GM12878 (cell line): ENCODE measurements at regions of chrX and their contacts with region 1.

Region 1: DNA sequence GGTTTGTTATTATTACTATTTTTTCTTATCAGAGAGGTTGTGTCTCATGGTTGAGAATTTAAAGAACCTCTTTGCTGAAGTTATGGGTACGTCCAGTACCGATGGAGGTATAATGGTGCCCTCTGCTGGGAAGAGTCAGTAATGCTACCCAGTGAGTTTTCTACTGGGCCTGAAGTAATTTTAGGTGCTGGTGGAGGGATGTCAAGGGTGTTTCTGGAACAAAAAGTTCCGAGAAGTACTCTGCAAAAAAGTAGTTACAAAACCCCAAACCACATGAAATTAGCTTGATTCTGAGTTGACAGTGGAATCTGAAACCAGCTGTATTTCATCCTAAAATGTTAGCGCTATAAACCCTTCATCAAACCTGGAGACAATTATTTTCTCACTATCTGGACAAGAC is 102.5 kb upstream of the MID1 start:
- DNase-seq: no peak
- ATAC-seq: peak; percentile 82
- H3K4me3 ChIP-seq: no peak overlapping the region
- H3K27ac ChIP-seq: no peak overlapping the region
- H3K4me1 ChIP-seq: no peaks in the 10 kb centered on the region
- H3K27me3 ChIP-seq: peaks cover 0 to 2% of the 10 kb centered on the region in 2 experiments; a peak in 1 of 4 replicates
- CTCF ChIP-seq: peak; percentile 73 to 78 (median 76)
- EP300 ChIP-seq: no peak
- POLR2A ChIP-seq: no peak
- RAD21 ChIP-seq: peak; percentile 74

Region 2: DNA sequence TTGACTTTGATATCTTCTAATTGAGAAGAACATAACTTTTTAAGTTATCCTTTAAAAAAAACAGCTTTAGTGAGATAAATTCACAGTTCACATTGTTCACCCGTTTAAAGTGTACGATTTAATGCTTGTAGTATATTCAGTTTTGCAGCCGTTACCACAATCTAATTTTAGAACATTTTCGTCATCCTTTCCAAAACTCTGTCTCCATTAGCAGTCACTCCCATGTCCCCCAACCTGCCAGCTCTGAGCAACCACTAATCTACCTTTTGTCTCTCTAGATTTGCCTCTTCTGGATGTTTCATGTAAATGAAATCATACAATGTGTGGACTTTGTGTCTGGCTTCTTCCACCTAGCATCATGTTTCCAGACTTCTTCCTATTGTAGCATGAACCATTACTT is 527.4 kb before region 1 on chrX:
- CTCF ChIA-PET with region 1: interaction called, 117 read pairs
- POLR2A ChIA-PET with region 1: no interaction called
- RAD21 ChIA-PET with region 1: interaction called, 16 read pairs
- SMC1A ChIA-PET with region 1: interaction called, 41 read pairs
- in situ Hi-C with region 1: no loop called
- intact Hi-C with region 1: no loop called
- DNase-seq: no peak
- ATAC-seq: no peak
- H3K4me3 ChIP-seq: no peak overlapping the region
- H3K27ac ChIP-seq: no peak overlapping the region
- H3K4me1 ChIP-seq: peaks cover 3% of the 10 kb centered on the region; the same call in 1 of the 2 replicates
- H3K27me3 ChIP-seq: 0 out of 4 replicates have a peak, but pooled peaks cover 0 to 1% of the 10 kb centered on the region in 2 experiments
- CTCF ChIP-seq: no peak
- EP300 ChIP-seq: no peak
- POLR2A ChIP-seq: no peak
- RAD21 ChIP-seq: no peak

Region 3: GRCh38 chrX:10904220-10904619 is 181.4 kb after region 1 on chrX:
- CTCF ChIA-PET with region 1: no interaction called
- POLR2A ChIA-PET with region 1: no interaction called
- RAD21 ChIA-PET with region 1: no interaction called
- SMC1A ChIA-PET with region 1: no interaction called
- in situ Hi-C with region 1: no loop called
- intact Hi-C with region 1: no loop called
- DNase-seq: no peak
- ATAC-seq: no peak
- H3K4me3 ChIP-seq: no peak overlapping the region
- H3K27ac ChIP-seq: no peak overlapping the region
- H3K4me1 ChIP-seq: no peaks in the 10 kb centered on the region
- H3K27me3 ChIP-seq: no peaks in the 10 kb centered on the region
- CTCF ChIP-seq: no peak
- EP300 ChIP-seq: no peak
- POLR2A ChIP-seq: no peak
- RAD21 ChIP-seq: no peak

Region 4: DNA sequence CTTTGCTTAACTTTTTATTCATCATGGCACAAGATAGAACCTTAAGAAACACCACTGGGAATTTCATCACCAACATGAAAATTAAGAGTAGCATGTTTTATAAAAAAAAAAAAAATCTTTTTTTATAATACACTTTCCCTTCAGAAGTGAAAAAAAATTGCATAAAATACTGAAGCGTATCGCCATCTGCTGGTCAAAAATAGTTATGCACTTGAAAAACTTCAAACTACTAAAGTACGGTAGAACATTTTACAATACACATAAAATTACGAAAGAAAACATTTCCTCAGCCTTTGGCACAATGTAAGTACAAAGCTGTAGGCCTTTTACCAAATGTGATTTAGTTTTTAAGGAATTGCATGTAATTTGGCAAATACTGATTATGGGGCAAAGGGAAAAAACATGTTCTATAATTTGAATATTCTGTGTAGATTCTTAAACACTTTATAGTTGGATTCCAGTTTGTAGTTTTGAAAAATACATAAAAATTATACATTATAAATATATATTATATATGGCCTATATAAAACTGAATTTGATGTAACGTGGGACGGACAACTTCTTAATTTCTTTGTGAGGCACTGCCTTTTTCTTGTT is 414.8 kb after region 1 on chrX:
- CTCF ChIA-PET with region 1: interaction called, 7 read pairs
- POLR2A ChIA-PET with region 1: no interaction called
- RAD21 ChIA-PET with region 1: interaction called, 3 read pairs
- SMC1A ChIA-PET with region 1: interaction called, 6 read pairs
- in situ Hi-C with region 1: no loop called
- intact Hi-C with region 1: loop called (anchors 2 kb)
- DNase-seq: no peak
- ATAC-seq: no peak
- H3K4me3 ChIP-seq: no peak overlapping the region
- H3K27ac ChIP-seq: no peak overlapping the region
- H3K4me1 ChIP-seq: no peaks in the 10 kb centered on the region
- H3K27me3 ChIP-seq: no peaks in the 10 kb centered on the region
- CTCF ChIP-seq: peak; percentile 52 to 60 (median 54)
- EP300 ChIP-seq: no peak
- POLR2A ChIP-seq: no peak
- RAD21 ChIP-seq: peak; percentile 55